Right ventricle myocardium inferior (tissue), 1 donor: ENCODE measurements at regions of chr6 and their contacts with region 1.

Region 1: GRCh38 chr6:83514866-83515466 is 2.6 kb downstream of the PRSS35 start:
- DNase-seq: no peak
- ATAC-seq: no peak

Region 2: GRCh38 chr6:83067448-83068413 is 447.2 kb before region 1 on chr6 and contains the start of gene DOP1A:
- intact Hi-C with region 1: loop called (anchors 2 kb)
- DNase-seq: peak; percentile 98
- ATAC-seq: peak; percentile 98
- total RNA-seq, gene DOP1A: 13.4 TPM

Region 3: DNA sequence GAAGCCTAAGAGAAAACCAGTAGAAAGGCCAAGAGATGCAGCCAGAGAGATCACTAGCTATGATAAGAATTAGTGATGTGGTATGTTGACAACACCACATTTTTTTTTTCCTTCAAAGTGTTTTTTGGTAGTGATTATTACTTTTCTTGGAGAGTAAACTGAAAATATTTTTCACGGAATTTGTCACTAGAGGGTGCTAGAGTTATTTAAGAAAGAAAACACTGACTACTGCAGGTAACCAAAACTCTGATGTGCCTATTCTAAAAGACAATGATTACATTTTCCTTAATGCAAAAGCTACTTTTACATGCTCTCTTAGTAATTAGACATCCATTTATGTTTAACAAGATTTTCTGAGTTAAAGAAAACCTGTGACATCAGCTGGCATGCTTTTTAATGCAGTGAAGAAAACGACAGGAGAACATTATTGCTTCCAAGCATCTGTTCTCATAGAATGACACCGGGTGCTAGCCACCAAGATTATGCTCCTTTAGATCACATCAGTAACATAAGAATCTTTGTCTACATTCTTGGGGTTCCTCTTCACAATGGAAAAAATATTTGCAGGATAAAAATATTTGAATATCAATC is 293.0 kb before region 1 on chr6:
- intact Hi-C with region 1: loop called (anchors 1 kb)
- DNase-seq: no peak
- ATAC-seq: no peak

Region 4: DNA sequence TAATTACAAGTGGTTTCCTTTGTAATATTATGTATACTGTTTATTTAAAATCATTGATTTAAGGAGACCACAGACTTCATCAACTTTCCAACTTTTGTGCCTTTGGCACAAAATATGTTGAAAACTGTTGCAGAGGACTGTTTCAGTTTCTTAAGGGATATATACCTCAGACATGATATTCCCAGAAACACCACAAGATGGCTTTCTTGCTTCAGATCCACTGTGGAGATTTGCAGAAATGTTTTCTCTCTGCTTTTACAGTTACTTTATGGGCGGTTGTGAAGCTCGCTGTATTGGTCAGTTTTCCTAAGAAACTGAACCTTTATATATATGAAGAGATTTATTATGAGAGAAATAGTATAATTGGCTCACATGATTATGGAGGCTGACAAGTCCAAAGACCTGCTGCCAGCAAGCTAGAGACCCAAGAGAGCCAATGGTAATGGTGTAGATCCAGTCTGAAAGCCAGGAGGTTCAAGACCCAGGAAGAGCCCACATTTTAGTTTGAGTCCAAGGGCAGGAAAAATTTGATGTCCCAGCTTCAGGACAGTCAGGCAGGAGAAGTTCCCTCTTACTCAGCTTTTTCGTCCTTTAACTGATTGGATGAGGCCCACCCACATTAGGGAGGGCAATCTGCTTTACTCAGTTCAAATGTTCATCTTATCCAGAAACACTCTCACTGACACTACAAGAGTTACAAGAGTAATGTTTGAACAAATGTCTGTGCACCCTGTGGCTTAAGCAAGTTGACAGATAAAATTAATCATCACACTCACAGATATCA is 96.9 kb before region 1 on chr6:
- intact Hi-C with region 1: loop called (anchors 2 kb)
- DNase-seq: no peak
- ATAC-seq: no peak

Region 5: GRCh38 chr6:83430611-83431563 is 84.1 kb before region 1 on chr6 and contains the start of gene ME1:
- intact Hi-C with region 1: loop called (anchors 5 kb)
- DNase-seq: peak; percentile 92
- ATAC-seq: peak; percentile 95
- total RNA-seq, gene ME1: 24.8 TPM